A549 (cell line): ENCODE measurements at regions of chr6 and their contacts with region 1.

Region 1: DNA sequence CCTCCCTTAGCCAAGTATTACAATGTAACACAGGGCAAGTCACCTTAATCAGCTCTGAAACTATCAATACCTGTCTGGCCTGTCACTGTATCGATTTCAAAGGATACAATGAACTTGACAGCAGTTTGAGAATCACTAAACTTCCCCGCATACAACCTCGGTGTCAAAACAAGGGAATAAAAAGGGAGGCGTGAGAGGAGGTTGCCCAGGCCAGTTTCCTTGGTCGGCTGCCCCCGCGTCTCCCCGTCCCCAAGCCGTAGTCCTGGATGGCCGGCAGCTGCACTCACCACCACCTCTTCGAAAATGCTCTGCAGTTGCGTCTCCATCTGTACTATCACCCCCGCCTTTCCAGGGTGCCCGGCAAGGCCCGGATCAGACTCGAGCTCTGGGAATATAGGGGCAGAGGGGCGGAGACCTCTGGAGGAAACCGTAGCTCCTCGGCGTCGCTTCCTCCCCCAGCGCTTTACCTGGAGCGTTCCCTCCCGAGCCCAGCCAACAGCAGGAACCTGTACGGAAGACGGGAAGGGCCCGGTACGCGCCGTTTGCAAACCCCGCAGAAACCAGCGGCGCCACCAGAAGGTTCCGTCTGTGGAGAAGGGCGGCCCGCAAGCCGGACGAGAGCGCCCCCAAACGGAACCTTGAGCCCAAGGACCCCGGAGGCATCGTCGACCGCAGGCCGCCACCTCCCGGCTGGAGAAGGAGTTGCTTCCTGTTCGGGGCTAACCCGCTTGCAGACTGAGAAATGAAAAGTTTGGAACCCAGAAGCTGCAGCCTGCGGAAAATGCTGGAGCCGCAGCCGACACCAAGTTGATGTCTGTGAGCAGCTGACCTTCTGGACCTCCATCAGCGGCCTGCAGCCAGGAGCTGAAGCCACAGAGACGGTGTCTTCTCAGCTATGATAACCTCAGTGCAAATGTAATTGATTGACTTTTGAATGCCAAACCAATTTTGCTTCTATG is at the start of gene MED23:
- DNase-seq: peak; percentile 68 to 93
- ATAC-seq: peak; percentile 98
- H3K4me3 ChIP-seq: peak within 1 kb of the TSS; percentile 69
- H3K27ac ChIP-seq: peak within 1 kb of the TSS; percentile 85 to 91
- H3K4me1 ChIP-seq: peaks cover 10% of the 10 kb centered on the region; the same call in 2 of the 3 replicates
- CTCF ChIP-seq: peak; percentile 91
- EP300 ChIP-seq: no peak
- POLR2A ChIP-seq: peak; percentile 40
- RAD21 ChIP-seq: peak; percentile 65 to 75
- polyA plus RNA-seq, gene MED23: 22.7 and 23.1 TPM in 2 replicates

Region 2: DNA sequence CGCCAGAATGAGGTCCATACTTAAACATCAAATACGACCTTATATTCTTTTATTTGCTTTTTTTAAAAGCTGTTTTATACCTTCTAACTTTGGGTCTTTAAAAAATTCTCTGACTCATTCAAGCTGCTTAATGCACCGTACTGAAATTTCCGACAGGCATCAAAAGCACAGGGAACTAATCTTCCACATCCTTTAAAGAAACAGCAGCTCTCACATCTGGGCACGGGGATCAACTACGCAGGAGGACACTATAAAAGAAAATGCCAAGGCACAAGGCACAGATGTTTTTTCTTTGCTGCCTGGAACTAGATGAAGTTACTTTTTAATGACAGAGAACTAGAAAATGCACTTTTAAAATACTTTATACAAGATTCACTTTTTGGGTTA is 167.4 kb before region 1 on chr6:
- CTCF ChIA-PET with region 1: no interaction called
- POLR2A ChIA-PET with region 1: no interaction called
- DNase-seq: no peak
- ATAC-seq: no peak
- H3K4me3 ChIP-seq: no peak overlapping the region
- H3K27ac ChIP-seq: no peak overlapping the region
- H3K4me1 ChIP-seq: no peaks in the 10 kb centered on the region
- CTCF ChIP-seq: no peak
- EP300 ChIP-seq: no peak
- POLR2A ChIP-seq: no peak
- RAD21 ChIP-seq: no peak

Region 3: DNA sequence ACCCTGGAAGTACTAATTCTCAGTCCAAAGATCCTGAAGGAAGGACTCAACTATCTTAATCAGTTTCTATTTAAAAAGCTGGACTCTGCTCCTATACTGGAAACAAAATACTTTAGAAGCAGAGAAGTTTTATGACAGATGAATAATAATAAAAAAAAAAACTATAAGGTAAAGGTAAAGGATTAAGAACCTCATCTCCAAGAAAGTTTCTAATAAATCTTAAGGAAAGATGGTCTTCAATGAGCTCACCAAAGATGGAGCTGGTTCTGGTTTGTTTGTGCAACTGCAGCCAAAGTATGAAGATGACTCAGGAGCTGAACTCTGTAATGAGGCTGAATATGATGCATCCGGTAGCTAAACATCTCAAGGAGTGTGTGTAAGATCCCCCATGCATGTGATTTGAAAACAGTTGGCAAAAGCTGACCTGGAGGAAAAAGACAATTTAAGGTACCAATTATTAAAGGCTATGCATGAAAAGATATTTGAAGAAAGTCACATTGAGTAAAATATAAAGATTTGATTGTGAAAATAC is 25.2 kb before region 1 on chr6:
- CTCF ChIA-PET with region 1: interaction called, 14 read pairs
- POLR2A ChIA-PET with region 1: no interaction called
- DNase-seq: peak; percentile 3 to 33
- ATAC-seq: peak in 1 of 2 experiments; percentile 75; a peak in 3 of 6 replicates
- H3K4me3 ChIP-seq: no peak overlapping the region
- H3K27ac ChIP-seq: no peak overlapping the region
- H3K4me1 ChIP-seq: no peaks in the 10 kb centered on the region; the same call in 2 of the 3 replicates
- CTCF ChIP-seq: no peak
- EP300 ChIP-seq: no peak
- POLR2A ChIP-seq: no peak
- RAD21 ChIP-seq: no peak

Region 4: GRCh38 chr6:131615275-131615674 is 12.7 kb before region 1 on chr6:
- CTCF ChIA-PET with region 1: interaction called, 15 read pairs
- POLR2A ChIA-PET with region 1: no interaction called
- DNase-seq: no peak
- ATAC-seq: no peak
- H3K4me3 ChIP-seq: no peak overlapping the region
- H3K27ac ChIP-seq: no peak overlapping the region
- H3K4me1 ChIP-seq: no peaks in the 10 kb centered on the region
- CTCF ChIP-seq: no peak
- EP300 ChIP-seq: no peak
- POLR2A ChIP-seq: no peak
- RAD21 ChIP-seq: no peak